ENCODE measurements at regions of chr4 and their contacts with region 1.

Region 1: GRCh38 chr4:184568770-184569169 is 80.5 kb downstream of the CASP3 start:
- DNase-seq: no peak
- H3K4me3 Mint-ChIP-seq: no peak overlapping the region
- H3K27ac Mint-ChIP-seq: no peak overlapping the region
- H3K4me1 Mint-ChIP-seq: peaks cover 3% of the 10 kb centered on the region
- H3K27me3 Mint-ChIP-seq: no peaks in the 10 kb centered on the region

Region 2: DNA sequence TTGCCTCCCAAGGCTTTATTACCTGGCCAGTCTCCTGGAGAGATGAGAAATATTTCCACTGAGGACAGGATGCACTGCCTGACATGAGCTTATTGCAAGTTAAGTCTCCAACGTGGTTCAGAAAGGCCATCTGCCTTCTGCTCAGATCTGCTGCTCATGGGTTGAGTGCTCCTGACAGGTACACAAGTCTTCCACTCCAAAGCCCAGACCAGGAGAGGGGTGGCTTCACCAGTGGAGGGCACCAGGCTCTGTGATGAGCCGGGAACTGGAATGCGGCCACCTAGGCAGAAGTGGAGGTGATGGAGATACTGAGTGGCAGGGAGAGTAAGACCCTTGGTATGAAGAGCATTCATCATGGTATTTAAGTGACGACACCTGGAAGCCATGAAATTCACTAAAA is 14.9 kb before region 1 on chr4:
- CTCF ChIA-PET with region 1: interaction called, 3 read pairs
- intact Hi-C with region 1: loop called (anchors 2 kb)
- DNase-seq: no peak
- H3K4me3 Mint-ChIP-seq: no peak overlapping the region
- H3K27ac Mint-ChIP-seq: no peak overlapping the region
- H3K4me1 Mint-ChIP-seq: peaks cover 4% of the 10 kb centered on the region
- H3K27me3 Mint-ChIP-seq: no peaks in the 10 kb centered on the region